Activated naive CD4-positive, alpha-beta T cell treated with anti-CD3 and anti-CD28 coated beads for 36 hours (primary cell): ENCODE measurements at regions of chr17 and their contacts with region 1.

Region 1: DNA sequence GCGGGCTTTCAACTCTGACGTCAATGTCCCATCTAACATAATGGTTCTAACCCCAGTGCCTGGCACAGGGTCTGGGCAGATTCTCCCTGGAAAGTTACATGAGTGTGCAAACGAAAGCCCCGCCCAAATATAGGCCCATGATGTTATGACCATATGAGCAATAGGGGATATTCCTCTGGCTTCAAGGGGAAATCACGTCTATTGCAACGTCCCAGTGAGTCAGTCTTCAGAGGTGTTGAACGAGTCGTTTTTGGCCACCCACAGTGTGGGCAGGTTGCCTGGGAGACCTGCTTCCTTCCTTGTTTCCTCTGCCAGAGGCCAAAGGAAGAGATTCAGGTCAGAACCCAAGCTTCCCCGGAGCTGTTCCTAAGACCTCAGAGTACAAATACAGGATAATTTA is 30.3 kb downstream of the PIK3R5 start:
- DNase-seq: peak; percentile 91
- H3K4me3 Mint-ChIP-seq: peak overlapping the region; percentile 35
- H3K27ac Mint-ChIP-seq: peak overlapping the region; percentile 82
- H3K4me1 Mint-ChIP-seq: peaks cover 61% of the 10 kb centered on the region
- H3K27me3 Mint-ChIP-seq: no peaks in the 10 kb centered on the region

Region 2: DNA sequence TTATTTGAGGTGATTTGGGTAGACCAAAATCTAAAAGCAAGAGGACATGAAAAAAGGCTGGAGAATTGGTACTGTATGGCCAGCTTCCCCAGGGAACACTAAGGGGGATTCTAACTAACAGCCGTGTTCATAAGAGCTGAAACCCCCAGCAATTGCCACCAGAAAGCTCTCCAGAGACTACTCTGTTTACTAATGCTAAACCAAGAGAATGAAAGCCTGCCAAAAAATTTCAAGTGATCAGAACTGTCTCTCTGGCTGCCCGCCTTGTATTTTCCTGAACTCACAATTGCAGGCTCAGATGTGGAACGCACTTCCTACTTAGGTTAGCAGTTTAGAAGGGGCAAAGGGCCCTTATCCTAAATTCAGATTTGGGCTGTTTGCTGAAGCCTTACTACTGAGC is 328.8 kb before region 1 on chr17:
- CTCF ChIA-PET with region 1: no interaction called
- intact Hi-C with region 1: no loop called
- DNase-seq: no peak
- H3K4me3 Mint-ChIP-seq: no peak overlapping the region
- H3K27ac Mint-ChIP-seq: no peak overlapping the region
- H3K4me1 Mint-ChIP-seq: no peaks in the 10 kb centered on the region
- H3K27me3 Mint-ChIP-seq: no peaks in the 10 kb centered on the region

Region 3: DNA sequence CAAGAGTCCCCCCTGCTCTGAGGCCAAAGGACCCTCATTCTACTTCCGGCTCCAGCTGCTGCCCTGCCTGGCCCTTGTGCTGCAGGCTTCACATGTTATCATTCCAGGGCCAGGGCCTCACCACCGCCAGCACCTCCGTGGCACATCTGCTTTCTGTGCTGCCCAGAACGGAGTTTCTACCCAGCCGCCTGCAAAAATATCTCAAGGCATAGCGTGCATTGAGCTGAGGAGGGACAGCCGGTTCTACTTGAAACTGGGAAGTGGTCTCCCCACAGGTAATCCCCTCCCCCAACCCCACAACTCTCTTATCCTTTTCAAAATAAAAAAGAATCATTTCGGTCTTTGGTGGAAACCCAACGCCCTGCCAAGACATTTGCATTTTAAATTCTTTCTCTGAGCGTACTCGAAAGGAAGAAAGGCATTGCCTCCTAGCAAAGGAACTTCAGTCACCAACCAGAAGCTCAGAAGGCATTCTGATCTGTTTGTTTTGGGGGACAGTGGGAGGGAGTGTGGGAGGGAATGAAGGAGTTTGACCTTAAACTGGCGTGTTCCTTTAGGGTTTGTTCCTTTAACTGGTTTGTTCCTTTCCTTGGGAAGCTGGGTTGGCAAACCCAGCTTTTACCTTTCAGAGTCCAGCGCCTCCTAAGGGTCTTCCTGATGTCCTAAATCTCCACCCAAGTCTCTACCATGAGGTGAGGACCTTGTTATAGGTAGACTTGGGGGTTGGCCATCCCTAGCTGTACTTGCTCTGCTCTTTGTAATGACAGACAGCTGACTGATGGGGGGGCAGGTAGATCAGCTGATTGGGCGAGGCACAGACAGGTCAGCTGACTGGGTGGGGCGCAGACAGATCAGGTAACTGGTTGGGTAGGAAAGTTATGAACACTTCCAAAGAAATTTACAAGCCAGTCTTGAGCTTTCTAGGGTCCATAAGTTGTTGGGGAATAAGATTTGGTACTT is 34.3 kb before region 1 on chr17:
- CTCF ChIA-PET with region 1: interaction called, 4 read pairs
- intact Hi-C with region 1: loop called (anchors 1 kb)
- DNase-seq: peak; percentile 58
- H3K4me3 Mint-ChIP-seq: no peak overlapping the region
- H3K27ac Mint-ChIP-seq: no peak overlapping the region
- H3K4me1 Mint-ChIP-seq: peaks cover 60% of the 10 kb centered on the region
- H3K27me3 Mint-ChIP-seq: no peaks in the 10 kb centered on the region

Region 4: DNA sequence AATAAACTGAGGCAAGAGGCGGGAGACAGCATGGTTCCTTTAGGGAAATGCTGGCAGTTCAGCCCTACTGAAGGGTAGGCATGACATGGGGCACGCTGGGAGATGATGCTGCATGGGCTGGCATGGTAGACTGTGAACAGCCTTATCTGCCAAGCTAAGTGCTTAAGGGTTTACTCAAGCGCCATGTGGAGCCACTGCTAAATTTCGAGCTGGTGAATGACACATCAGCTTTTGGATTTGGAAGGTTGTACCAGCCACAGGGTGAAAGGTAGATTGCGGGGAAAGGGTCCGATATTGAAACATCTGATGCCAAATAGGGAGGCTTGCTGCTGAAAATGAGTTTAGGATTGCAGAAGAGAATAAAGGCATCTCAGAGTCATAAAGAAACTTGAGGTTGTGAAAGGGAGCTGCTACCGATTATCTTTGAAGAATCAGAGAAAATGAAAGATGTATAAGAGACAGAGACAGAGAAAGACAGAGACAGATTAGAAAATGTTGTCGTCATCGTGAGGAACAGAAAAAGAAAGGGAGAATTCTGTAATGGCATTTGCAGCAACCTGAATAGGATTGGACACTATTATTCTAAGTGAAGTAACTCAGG is 14.0 kb after region 1 on chr17:
- CTCF ChIA-PET with region 1: interaction called, 3 read pairs
- intact Hi-C with region 1: loop called (anchors 1 kb)
- DNase-seq: peak; percentile 64
- H3K4me3 Mint-ChIP-seq: peak overlapping the region; percentile 58
- H3K27ac Mint-ChIP-seq: peak overlapping the region; percentile 91
- H3K4me1 Mint-ChIP-seq: peaks cover 85% of the 10 kb centered on the region
- H3K27me3 Mint-ChIP-seq: no peaks in the 10 kb centered on the region

Region 5: DNA sequence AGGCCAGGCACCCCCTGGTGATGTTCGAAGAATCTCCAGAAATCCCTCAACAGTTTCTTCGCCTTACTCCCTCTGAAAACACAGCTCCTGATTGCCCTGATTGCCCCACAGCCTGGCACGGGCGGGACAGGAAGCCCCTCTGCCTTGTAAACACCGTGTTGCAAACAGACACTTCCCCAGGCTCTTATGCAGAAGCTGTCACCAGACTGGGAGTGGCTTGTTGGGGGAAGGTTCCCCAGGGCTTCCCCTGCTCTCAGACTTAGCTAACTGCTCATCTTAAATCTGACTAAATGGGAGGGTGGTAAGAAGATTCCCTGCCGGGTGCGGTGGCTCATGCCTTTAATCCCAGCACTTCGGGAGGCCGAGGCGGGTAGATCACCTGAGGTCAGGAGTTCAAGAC is 19.1 kb after region 1 on chr17:
- CTCF ChIA-PET with region 1: interaction called, 7 read pairs
- intact Hi-C with region 1: loop called (anchors 1 kb)
- DNase-seq: peak; percentile 92
- H3K4me3 Mint-ChIP-seq: peak overlapping the region; percentile 25
- H3K27ac Mint-ChIP-seq: peak overlapping the region; percentile 83
- H3K4me1 Mint-ChIP-seq: peaks cover 95% of the 10 kb centered on the region
- H3K27me3 Mint-ChIP-seq: no peaks in the 10 kb centered on the region

Region 6: DNA sequence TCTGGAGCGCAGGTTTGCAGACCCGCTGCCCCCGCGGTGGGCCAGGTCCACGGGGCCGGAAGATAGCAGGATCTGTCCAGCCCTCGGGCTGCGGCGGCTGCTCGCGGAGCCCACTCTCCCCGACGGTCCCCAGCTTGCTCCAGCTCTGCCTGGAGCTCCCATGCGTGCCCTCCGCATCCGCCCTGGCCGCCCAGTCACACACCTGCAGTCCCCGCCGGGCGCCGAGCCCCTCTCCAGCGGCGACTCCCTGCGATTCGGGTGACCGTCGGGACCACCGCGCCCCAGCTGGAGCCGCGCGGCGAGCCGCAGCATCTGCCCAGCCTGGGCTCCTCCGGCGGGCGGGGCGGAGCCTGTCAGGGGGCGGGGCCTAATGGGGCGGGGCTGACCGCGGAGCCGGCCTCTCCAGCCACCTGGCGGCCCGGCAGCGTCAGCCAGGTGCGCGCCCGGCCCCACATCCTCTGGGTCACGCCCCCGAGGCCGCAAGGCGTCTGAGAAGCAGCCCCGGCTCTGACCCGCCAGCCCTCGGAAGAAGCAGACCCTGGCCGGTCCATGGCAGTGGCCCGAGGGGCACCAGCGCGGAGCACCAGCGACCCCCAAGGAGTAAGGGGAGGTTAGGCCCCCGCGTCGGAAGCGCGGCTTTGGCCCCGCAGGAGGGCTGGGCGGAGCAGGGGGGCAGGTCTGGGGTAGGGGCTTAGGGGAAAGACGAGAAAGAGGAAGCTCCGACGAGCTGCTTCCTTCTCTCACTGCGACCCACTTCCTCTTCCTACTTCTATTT is 30.4 kb after region 1 on chr17 and contains the start of gene PIK3R5:
- CTCF ChIA-PET with region 1: interaction called, 6 read pairs
- intact Hi-C with region 1: loop called (anchors 1 kb)
- DNase-seq: peak; percentile 82
- H3K4me3 Mint-ChIP-seq: peak within 1 kb of the TSS; percentile 95
- H3K27ac Mint-ChIP-seq: peak within 1 kb of the TSS; percentile 80
- H3K4me1 Mint-ChIP-seq: peaks cover 46% of the 10 kb centered on the region
- H3K27me3 Mint-ChIP-seq: no peaks in the 10 kb centered on the region
- total RNA-seq, gene PIK3R5: 15.9 to 18.1 TPM

Region 7: DNA sequence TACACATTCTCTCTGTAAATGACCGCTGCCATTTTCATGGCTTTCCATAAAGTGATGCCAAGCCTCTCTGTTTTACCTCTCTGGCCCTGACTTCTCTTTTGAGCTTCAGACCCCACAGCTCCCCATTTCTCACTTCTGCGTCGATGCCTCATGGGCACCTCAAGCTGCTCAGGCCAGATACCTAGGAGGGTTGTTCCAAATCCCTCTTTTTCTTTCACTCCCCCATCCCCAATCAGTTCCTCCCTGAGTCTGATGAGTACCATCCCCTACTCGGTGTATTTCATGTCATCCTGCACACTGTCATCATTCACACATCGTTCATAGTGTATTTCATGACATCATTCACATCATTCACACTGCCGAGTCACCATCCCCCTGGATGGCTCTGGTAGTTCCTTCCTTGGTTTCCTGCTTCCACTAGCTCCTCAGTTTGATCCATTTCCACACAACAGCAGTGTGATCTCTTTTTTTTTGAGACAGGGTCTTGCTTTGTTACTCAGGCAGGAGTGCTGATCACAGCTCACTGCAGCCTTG is 129.2 kb after region 1 on chr17:
- CTCF ChIA-PET with region 1: no interaction called
- intact Hi-C with region 1: no loop called
- DNase-seq: no peak
- H3K4me3 Mint-ChIP-seq: no peak overlapping the region
- H3K27ac Mint-ChIP-seq: no peak overlapping the region
- H3K4me1 Mint-ChIP-seq: no peaks in the 10 kb centered on the region
- H3K27me3 Mint-ChIP-seq: no peaks in the 10 kb centered on the region

Region 8: GRCh38 chr17:9132944-9133575 is 197.9 kb after region 1 on chr17:
- CTCF ChIA-PET with region 1: no interaction called
- intact Hi-C with region 1: no loop called
- DNase-seq: no peak
- H3K4me3 Mint-ChIP-seq: no peak overlapping the region
- H3K27ac Mint-ChIP-seq: no peak overlapping the region
- H3K4me1 Mint-ChIP-seq: no peaks in the 10 kb centered on the region
- H3K27me3 Mint-ChIP-seq: no peaks in the 10 kb centered on the region

Region 9: GRCh38 chr17:9273428-9274391 is 338.5 kb after region 1 on chr17:
- CTCF ChIA-PET with region 1: no interaction called
- intact Hi-C with region 1: loop called (anchors 5 kb)
- DNase-seq: peak; percentile 65
- H3K4me3 Mint-ChIP-seq: no peak overlapping the region
- H3K27ac Mint-ChIP-seq: peak overlapping the region; percentile 82
- H3K4me1 Mint-ChIP-seq: peaks cover 24% of the 10 kb centered on the region
- H3K27me3 Mint-ChIP-seq: no peaks in the 10 kb centered on the region